Ovary (tissue), 10 donors: ENCODE measurements at regions of chr2 and their contacts with region 1.

Region 1: DNA sequence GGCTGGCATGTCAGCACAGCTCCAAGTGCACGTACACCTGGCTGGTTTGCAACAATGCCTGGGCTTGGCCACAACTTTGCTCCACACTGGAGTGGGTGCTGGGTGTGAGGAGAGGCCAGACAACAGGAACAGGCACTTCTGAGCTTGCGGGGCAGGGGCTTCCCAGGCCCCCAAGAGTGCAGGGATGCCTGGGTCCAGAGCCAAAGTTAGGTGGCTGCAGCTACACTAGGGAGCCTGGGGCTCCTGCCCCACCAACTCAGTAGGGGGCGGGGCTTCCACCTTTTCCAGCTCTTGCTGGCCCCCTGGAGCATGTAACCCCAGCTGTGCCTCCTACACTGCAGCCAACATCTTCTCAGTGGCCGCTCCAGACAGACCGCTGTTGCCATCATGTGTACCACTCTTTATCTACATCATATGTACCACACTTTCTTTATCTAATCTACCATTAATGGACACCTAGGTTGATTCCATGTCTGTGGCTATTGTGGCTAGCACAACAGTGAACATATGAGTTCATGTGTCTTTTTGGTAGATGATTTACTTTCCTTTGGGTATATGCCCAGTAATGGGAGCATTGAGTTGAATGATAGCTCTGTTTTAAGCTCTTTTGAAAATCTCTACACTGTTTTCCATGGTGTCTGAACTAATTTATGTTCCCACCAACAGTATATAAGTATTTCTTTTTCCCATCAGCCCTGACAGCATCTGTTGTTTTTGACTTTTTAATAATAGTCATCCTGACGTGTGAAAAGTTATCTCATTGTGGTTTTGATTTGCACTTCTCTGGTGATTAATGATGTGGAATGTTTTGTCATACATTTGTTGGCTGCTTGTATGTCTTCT is 87.9 kb downstream of the ZNF804A start:
- DNase-seq: no peak
- H3K4me3 ChIP-seq: no peak overlapping the region
- H3K27ac ChIP-seq: no peak overlapping the region
- H3K4me1 ChIP-seq: no peaks in the 10 kb centered on the region
- H3K27me3 ChIP-seq: no peaks in the 10 kb centered on the region
- CTCF ChIP-seq: no peak
- EP300 ChIP-seq: no peak
- POLR2A ChIP-seq: no peak

Region 2: DNA sequence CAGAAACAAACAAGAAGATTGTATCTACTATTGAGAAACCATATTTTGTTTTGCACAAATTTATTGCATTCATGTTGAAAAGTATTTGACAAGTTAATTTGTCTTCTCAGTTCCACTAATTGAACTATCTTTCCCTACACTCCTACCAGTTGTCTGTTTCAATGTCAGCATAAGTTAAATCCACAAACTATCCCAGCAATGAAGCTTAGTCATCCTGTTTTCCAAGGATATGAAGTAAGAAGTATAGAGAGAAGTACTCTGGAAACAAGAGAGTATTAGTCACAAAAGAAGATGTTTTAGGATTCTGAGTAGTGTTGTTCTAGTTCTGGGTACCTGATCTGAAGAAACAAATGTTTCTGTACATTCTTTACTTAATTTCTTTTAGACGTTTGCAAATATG is 349.5 kb before region 1 on chr2:
- intact Hi-C with region 1: no loop called
- DNase-seq: no peak
- H3K4me3 ChIP-seq: no peak overlapping the region
- H3K27ac ChIP-seq: no peak overlapping the region
- H3K4me1 ChIP-seq: no peaks in the 10 kb centered on the region
- H3K27me3 ChIP-seq: no peaks in the 10 kb centered on the region
- CTCF ChIP-seq: no peak
- EP300 ChIP-seq: no peak
- POLR2A ChIP-seq: no peak

Region 3: GRCh38 chr2:184394642-184395041 is 291.6 kb before region 1 on chr2:
- intact Hi-C with region 1: loop called in 1 of 4 experiments (anchors 5 kb)
- DNase-seq: no peak
- H3K4me3 ChIP-seq: no peak overlapping the region
- H3K27ac ChIP-seq: no peak overlapping the region
- H3K4me1 ChIP-seq: no peaks in the 10 kb centered on the region
- H3K27me3 ChIP-seq: no peaks in the 10 kb centered on the region
- CTCF ChIP-seq: no peak
- EP300 ChIP-seq: no peak
- POLR2A ChIP-seq: no peak